Heart left ventricle (tissue), 16 donors: ENCODE measurements at regions of chr15 and their contacts with region 1.

Region 1: DNA sequence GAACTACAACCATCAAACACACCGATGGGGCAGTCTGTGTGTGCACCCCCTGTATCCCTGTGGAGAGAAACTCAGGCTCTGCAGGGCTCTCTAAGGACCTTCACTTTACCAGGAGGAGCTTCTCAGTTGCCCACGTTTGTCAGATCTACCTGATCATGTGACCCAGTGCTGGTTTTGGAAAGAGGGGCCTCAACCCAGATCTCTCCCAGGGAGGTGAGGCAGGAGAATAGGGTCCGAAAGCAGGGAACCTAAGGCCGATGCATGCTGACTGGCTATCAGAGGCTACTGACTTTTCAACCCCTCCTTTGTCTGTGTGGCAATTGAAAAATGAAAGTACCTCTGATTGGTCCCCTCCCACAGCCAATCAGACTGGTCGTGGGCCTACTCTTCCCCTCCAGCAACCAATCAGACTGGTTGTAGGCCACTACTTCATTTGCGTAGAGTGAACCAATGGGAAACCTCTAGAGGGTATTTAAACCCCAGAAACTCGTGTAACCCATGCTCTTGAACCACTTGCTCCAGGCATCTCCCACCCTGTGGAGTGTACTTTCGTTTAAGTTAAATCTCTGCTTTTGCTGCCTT is 34.0 kb downstream of the RHCG start:
- DNase-seq: no peak
- ATAC-seq: no peak
- H3K4me3 ChIP-seq: no peak overlapping the region
- H3K27ac ChIP-seq: no peak overlapping the region
- H3K4me1 ChIP-seq: no peaks in the 10 kb centered on the region
- H3K27me3 ChIP-seq: peaks cover 0 to 41% (median 0%) of the 10 kb centered on the region in 9 donors
- CTCF ChIP-seq: no peak
- POLR2A ChIP-seq: no peak

Region 2: DNA sequence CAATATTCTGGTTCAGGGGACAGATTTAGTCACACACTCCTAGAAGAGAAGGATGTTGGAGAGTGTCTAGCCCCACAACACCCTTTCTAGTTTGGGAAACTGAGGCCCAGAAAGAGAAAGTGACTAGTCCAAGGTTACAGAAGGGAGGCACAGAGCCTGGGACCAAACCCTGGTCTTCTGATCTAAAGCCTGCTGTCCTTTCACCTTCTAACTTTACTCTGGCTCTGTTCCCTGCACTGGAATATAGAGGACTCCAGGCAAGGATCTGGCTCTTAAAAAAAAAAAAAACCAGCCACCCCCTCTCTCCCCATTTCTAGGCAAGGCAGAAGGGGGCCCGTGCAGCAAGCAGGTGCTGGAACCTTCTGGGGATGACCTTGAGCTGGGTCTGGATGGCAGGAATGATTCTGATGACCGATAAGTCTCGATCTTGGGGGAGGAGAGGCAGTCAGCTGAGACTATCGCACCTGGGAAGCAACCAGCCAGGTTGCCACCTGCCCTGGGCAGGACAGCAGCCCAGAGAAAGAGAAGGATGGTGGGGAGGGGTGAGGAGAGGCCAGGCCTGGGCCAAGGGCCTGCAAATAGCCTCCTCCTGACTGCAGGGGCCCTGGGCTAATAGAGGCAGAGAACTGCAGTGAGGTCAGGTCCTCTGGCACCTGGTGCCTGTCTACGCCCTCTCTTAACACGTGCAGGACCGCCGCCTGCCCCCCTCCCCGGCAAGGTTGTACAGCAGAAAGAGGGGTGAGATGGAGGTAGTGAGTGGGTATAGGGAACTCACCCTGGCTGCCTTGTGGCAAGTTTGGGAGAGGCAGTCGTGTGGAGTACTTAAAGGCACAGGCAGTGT is 64.4 kb after region 1 on chr15:
- intact Hi-C with region 1: loop called in 1 of 10 experiments (anchors 10 kb)
- DNase-seq: no peak
- ATAC-seq: no peak
- H3K4me3 ChIP-seq: no peak overlapping the region
- H3K27ac ChIP-seq: no peak overlapping the region
- H3K4me1 ChIP-seq: no peaks in the 10 kb centered on the region
- H3K27me3 ChIP-seq: peaks cover 0 to 4% (median 0%) of the 10 kb centered on the region in 9 donors
- CTCF ChIP-seq: no peak
- POLR2A ChIP-seq: no peak